ENCODE measurements at regions of chr3 and their contacts with region 1.

Region 1: GRCh38 chr3:72753495-72753894 is 94.8 kb downstream of the SHQ1 start:
- DNase-seq: no peak
- H3K4me3 Mint-ChIP-seq: no peak overlapping the region
- H3K27ac Mint-ChIP-seq: no peak overlapping the region
- H3K4me1 Mint-ChIP-seq: peaks cover 30% of the 10 kb centered on the region
- H3K27me3 Mint-ChIP-seq: no peaks in the 10 kb centered on the region

Region 2: DNA sequence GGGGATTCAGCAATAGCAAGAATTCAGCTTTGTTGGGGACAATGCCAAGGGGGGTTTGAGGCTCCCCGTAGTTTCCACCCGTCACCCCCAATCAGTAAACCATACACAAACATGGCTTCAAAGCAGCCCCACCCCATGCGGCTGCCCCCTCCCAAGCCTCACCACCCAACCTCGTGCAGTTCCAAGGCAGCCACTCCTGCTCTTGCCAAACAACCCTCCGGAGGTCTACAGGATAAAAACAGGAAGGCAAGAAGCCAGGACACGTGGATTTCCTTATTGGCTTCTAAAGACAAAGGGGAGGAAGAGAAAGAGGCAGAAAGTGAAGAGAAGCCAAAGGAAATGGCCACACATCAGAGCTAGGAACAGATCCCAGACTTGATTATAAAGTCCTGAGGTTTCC is 26.3 kb before region 1 on chr3:
- CTCF ChIA-PET with region 1: no interaction called
- POLR2A ChIA-PET with region 1: no interaction called
- DNase-seq: no peak
- H3K4me3 Mint-ChIP-seq: no peak overlapping the region
- H3K27ac Mint-ChIP-seq: no peak overlapping the region
- H3K4me1 Mint-ChIP-seq: peaks cover 10% of the 10 kb centered on the region
- H3K27me3 Mint-ChIP-seq: no peaks in the 10 kb centered on the region

Region 3: GRCh38 chr3:72738752-72739530 is 14.6 kb before region 1 on chr3:
- CTCF ChIA-PET with region 1: interaction called, 3 read pairs
- POLR2A ChIA-PET with region 1: interaction called, 14 read pairs
- DNase-seq: peak; percentile 76
- H3K4me3 Mint-ChIP-seq: peak overlapping the region; percentile 73
- H3K27ac Mint-ChIP-seq: peak overlapping the region; percentile 57
- H3K4me1 Mint-ChIP-seq: peaks cover 18% of the 10 kb centered on the region
- H3K27me3 Mint-ChIP-seq: no peaks in the 10 kb centered on the region

Region 4: GRCh38 chr3:72797773-72798543 is 44.5 kb after region 1 on chr3:
- CTCF ChIA-PET with region 1: no interaction called
- POLR2A ChIA-PET with region 1: no interaction called
- DNase-seq: no peak
- H3K4me3 Mint-ChIP-seq: no peak overlapping the region
- H3K27ac Mint-ChIP-seq: no peak overlapping the region
- H3K4me1 Mint-ChIP-seq: peaks cover 7% of the 10 kb centered on the region
- H3K27me3 Mint-ChIP-seq: no peaks in the 10 kb centered on the region